ENCODE measurements at regions of chr7 and their contacts with region 1.

Region 1: GRCh38 chr7:28726555-28726954 is 231.6 kb downstream of the TRIL start:
- DNase-seq: no peak
- ATAC-seq: no peak
- H3K4me3 ChIP-seq: no peak overlapping the region
- H3K27ac ChIP-seq: no peak overlapping the region
- H3K4me1 ChIP-seq: peaks cover 49% of the 10 kb centered on the region
- H3K27me3 ChIP-seq: no peaks in the 10 kb centered on the region
- CTCF ChIP-seq: no peak

Region 2: GRCh38 chr7:28643589-28644340 is 82.8 kb before region 1 on chr7:
- CTCF ChIA-PET with region 1: no interaction called
- POLR2A ChIA-PET with region 1: interaction called, 3 read pairs
- intact Hi-C with region 1: loop called (anchors 2 kb)
- DNase-seq: no peak
- ATAC-seq: no peak
- H3K4me3 ChIP-seq: no peak overlapping the region
- H3K27ac ChIP-seq: no peak overlapping the region
- H3K4me1 ChIP-seq: peaks cover 15% of the 10 kb centered on the region
- H3K27me3 ChIP-seq: no peaks in the 10 kb centered on the region
- CTCF ChIP-seq: no peak

Region 3: DNA sequence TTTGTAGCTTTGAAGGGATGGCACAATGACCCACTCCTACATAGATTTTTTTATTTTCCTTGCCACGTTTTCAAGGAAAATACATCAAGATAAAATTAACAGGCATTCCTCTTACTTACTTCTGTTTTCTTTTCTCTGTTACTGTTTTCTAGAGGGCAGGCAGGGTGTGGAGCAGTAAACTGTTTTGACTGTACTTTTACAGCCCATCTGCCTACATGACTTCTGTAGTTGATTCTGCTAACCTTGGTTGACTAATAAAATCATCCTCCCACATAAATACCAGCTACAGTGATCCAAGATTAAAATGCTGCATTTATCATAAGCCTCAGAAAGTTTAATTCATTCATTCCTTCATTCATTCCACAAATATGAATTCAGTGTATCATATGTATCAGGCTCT is 73.1 kb after region 1 on chr7:
- CTCF ChIA-PET with region 1: no interaction called
- POLR2A ChIA-PET with region 1: no interaction called
- intact Hi-C with region 1: loop called (anchors 2 kb)
- DNase-seq: no peak
- ATAC-seq: peak; percentile 59
- H3K4me3 ChIP-seq: no peak overlapping the region
- H3K27ac ChIP-seq: no peak overlapping the region
- H3K4me1 ChIP-seq: peaks cover 10% of the 10 kb centered on the region
- H3K27me3 ChIP-seq: no peaks in the 10 kb centered on the region
- CTCF ChIP-seq: no peak

Region 4: DNA sequence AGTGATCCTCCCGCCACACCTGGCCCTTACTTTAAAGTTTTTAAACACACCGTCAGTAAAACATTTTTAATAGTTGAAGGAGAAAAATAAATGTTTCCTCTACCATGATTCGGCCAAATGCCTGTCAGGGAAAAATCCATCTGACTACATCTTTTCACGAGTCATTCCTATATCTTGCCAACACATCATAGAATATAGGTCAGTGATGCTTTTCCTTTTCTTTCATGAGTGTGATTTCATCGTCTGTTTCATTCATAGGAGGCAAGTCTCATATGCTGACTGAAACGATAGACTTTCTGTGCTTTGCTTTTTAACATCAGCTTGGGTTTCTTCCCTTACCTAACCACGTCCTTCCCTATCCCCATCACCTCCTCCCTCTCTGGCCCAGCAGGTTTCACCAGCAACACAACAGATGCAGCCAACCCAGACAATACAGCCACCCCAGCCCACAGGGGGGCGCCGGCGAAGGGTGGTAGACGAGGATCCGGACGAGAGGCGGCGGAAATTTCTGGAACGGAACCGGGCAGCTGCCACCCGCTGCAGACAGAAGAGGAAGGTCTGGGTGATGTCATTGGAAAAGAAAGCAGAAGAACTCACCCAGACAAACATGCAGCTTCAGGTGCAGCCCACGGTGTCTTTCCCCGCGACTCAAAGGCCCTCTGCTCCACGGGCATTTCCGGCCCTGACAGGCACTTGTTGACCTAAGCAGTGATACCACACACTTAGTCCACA is 82.4 kb after region 1 on chr7:
- CTCF ChIA-PET with region 1: no interaction called
- POLR2A ChIA-PET with region 1: interaction called, 3 read pairs
- intact Hi-C with region 1: loop called (anchors 1 kb)
- DNase-seq: peak; percentile 5
- ATAC-seq: no peak
- H3K4me3 ChIP-seq: no peak overlapping the region
- H3K27ac ChIP-seq: no peak overlapping the region
- H3K4me1 ChIP-seq: peaks cover 30% of the 10 kb centered on the region
- H3K27me3 ChIP-seq: no peaks in the 10 kb centered on the region
- CTCF ChIP-seq: no peak; the same call in 1 of the 2 replicates

Region 5: GRCh38 chr7:29126804-29127203 is 400.2 kb after region 1 on chr7:
- CTCF ChIA-PET with region 1: no interaction called
- POLR2A ChIA-PET with region 1: no interaction called
- intact Hi-C with region 1: no loop called
- DNase-seq: peak; percentile 23
- ATAC-seq: peak; percentile 62
- H3K4me3 ChIP-seq: no peak overlapping the region
- H3K27ac ChIP-seq: no peak overlapping the region
- H3K4me1 ChIP-seq: 0 out of 2 replicates have a peak, but pooled peaks cover 4% of the 10 kb centered on the region
- H3K27me3 ChIP-seq: no peaks in the 10 kb centered on the region
- CTCF ChIP-seq: no peak